G401 (cell line): ENCODE measurements at regions of chr2 and their contacts with region 1.

Region 1: DNA sequence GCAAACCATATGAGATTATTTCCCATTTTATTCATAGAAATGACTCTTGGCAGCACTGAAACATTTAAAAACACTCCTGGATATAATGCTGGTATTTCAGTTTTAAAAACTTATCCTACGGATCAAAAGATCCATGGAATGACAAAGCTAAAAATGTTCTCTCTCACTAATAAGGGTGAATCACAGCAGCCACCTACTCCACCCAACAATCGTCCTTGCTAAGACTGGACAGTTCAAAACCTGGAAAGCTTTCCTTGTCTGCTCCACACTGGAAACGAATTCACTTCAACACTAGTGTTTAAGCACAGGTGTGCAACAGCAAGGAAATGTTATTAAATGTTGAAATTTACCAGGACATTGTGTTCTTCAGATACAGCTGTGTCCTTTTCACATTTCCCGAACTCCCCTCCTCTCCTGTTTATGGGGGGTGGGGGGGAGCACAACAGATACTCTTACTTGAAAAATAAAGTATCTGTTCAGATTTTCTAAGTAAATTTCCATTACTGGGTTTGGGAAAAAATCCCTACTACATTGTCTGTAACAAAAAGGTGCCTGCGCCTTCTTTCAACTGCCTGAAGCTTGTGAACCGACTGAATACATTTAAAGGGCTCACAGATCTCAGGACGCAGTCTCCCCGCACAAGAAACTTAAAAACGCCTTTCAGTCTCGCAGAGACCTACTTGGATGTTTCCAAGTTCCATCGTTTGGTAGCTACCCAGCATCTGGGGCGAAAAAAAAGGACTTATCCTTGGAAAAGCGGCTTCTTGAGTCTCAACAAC is 1.4 kb downstream of the YWHAQ start:
- DNase-seq: peak; percentile 19

Region 2: GRCh38 chr2:9508931-9509330 is 120.5 kb before region 1 on chr2:
- in situ Hi-C with region 1: no loop called
- DNase-seq: no peak

Region 3: DNA sequence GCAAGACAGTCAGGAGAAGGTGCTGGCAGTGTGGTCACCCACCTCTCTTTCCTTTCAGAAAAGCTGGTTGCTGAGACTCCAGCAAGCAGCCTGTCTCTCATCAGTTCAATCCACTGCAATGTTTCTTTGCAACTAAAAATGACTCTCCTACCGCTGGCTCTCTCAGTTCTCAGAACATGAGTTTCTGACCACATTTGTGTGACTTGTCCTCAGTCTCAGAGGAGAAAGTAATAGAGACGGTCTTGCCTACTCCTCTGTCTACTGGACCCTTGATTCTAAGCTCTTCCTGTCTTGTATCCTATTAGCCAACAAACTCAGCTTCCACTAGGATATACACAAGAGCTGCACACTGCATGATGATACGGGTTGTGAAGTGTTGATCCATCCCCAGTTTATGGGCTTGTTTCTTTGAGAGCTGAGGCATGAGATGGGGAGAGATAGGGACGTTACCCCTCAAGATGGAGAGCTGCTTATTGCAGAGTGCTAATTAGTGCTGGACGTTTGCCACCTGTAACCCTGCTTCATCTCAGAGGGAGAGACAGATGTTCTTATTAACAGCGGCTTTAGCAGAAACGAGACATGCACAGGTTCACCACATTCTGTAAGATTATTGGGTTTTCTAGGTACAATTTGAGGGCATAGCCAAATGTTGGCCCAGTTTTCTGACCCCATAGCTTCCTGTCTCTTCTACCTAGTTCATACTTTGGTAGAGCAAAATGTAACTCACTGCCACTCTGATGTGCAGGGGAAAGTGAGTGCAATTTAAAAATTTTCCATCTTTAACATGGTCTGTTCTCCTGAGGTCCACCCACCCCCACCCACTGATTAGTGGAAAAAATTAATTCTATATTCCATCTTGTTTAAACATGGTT is 33.8 kb after region 1 on chr2:
- in situ Hi-C with region 1: loop called (anchors 5 kb)
- DNase-seq: no peak

Region 4: GRCh38 chr2:9673914-9674481 is 44.6 kb after region 1 on chr2:
- in situ Hi-C with region 1: no loop called
- DNase-seq: no peak